ENCODE measurements at regions of chr15 and their contacts with region 1.

Region 1: DNA sequence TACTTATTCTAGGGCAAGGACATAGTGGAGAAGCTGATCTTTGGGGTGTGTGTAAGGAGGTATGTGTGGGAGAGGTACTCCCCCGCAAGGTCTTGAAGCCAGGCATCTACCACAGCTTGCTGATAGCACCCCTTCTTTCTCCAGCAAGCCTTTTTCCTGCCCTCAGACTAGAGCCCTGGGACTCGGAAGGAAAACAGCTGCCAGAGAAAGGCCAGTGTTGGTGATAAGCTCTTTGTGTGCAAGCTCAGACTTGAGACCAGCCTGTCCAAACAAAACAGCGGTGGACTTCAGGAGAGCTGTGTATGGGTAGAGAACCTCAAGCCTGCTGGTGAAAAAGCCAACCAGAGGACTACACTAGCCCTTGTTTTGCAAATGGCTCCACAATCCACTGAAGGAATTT is 1028.6 kb downstream of the MCTP2 start:
- DNase-seq: no peak
- H3K4me3 ChIP-seq: no peak overlapping the region
- H3K27ac ChIP-seq: peak overlapping the region in 1 of 2 donors; percentile 1
- H3K4me1 ChIP-seq: peaks cover 20% of the 10 kb centered on the region
- H3K27me3 ChIP-seq: no peaks in the 10 kb centered on the region
- CTCF ChIP-seq: no peak
- POLR2A ChIP-seq: no peak

Region 2: GRCh38 chr15:95464509-95464908 is 204.5 kb after region 1 on chr15:
- intact Hi-C with region 1: loop called (anchors 10 kb)
- DNase-seq: peak; percentile 87
- H3K4me3 ChIP-seq: no peak overlapping the region
- H3K27ac ChIP-seq: peak overlapping the region; percentile 47 to 80
- H3K4me1 ChIP-seq: peaks cover 5% of the 10 kb centered on the region
- H3K27me3 ChIP-seq: no peaks in the 10 kb centered on the region
- CTCF ChIP-seq: no peak
- POLR2A ChIP-seq: no peak

Region 3: GRCh38 chr15:96345560-96346399 is 1085.8 kb after region 1 on chr15:
- intact Hi-C with region 1: loop called (anchors 10 kb)
- DNase-seq: peak; percentile 86
- H3K4me3 ChIP-seq: peak overlapping the region; percentile 34 to 86
- H3K27ac ChIP-seq: peak overlapping the region; percentile 95 to 97
- H3K4me1 ChIP-seq: peaks cover 21% of the 10 kb centered on the region
- H3K27me3 ChIP-seq: no peaks in the 10 kb centered on the region
- CTCF ChIP-seq: peak; percentile 36 to 60 (median 53)
- POLR2A ChIP-seq: no peak